ENCODE measurements at regions of chr1 and their contacts with region 1.

Region 1: GRCh38 chr1:207811920-207812720 is 60.3 kb downstream of the CD46 start:
- DNase-seq: no peak
- ATAC-seq: peak; percentile 53
- H3K4me3 ChIP-seq: no peak overlapping the region
- H3K27ac ChIP-seq: no peak overlapping the region
- H3K4me1 ChIP-seq: peaks cover 26% of the 10 kb centered on the region
- H3K27me3 ChIP-seq: no peaks in the 10 kb centered on the region
- CTCF ChIP-seq: peak; percentile 50 to 60 (median 56)
- EP300 ChIP-seq: no peak
- POLR2A ChIP-seq: peak; percentile 37; the same call in 1 of the 2 replicates
- RAD21 ChIP-seq: peak; percentile 55

Region 2: GRCh38 chr1:207742850-207743555 is 69.1 kb before region 1 on chr1:
- CTCF ChIA-PET with region 1: no interaction called
- POLR2A ChIA-PET with region 1: no interaction called
- RAD21 ChIA-PET with region 1: no interaction called
- SMC1A ChIA-PET with region 1: no interaction called
- in situ Hi-C with region 1: no loop called
- intact Hi-C with region 1: no loop called
- DNase-seq: no peak
- ATAC-seq: no peak
- H3K4me3 ChIP-seq: no peak overlapping the region
- H3K27ac ChIP-seq: no peak overlapping the region
- H3K4me1 ChIP-seq: no peaks in the 10 kb centered on the region
- H3K27me3 ChIP-seq: no peaks in the 10 kb centered on the region
- CTCF ChIP-seq: no peak
- EP300 ChIP-seq: no peak
- POLR2A ChIP-seq: no peak
- RAD21 ChIP-seq: no peak

Region 3: DNA sequence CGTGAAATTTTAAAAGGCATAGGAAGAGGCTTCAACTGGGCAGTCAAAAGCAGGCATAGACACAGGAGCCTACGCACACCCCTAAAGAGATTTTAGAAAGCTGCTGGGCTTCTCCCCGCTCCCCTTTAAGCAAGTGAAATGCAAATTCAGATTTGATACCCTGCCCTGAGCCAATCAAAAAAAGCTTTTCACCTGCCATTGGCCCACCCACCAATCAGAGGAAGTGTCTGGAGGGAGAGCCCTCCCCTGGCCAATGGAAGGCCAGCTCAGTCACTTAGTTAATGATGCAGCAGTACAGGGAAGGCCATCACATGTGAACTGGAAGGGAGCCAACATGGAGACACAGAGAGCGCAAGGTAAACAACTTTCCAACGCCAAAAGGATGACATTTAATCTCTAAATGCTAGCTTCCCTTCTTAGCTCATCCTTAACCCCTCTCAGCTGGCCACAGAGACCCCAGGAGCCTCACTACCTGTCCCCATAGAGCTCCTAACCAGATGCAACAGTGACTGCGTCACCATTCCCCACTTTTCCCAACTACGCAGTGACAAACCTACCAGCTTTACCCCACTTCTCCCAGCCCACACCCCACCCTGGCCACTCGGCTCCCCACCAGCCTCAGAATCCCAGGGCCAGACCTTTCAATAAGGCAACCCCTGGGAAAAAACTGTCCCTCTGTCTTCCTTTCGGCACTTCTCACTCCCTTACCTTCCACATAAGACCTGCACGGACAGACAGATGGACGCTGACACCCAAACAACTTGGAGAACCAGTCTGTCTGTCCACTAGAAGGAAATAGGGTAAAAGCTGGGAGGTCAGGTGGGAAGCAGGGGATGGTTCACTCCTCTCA is 10.7 kb after region 1 on chr1:
- CTCF ChIA-PET with region 1: interaction called, 18 read pairs
- POLR2A ChIA-PET with region 1: interaction called, 15 read pairs
- RAD21 ChIA-PET with region 1: interaction called, 13 read pairs
- SMC1A ChIA-PET with region 1: interaction called, 14 read pairs
- in situ Hi-C with region 1: no loop called
- intact Hi-C with region 1: no loop called
- DNase-seq: peak; percentile 96
- ATAC-seq: peak; percentile 77
- H3K4me3 ChIP-seq: peak overlapping the region; percentile 93
- H3K27ac ChIP-seq: peak overlapping the region; percentile 95
- H3K4me1 ChIP-seq: peaks cover 34% of the 10 kb centered on the region
- H3K27me3 ChIP-seq: no peaks in the 10 kb centered on the region
- CTCF ChIP-seq: no peak
- EP300 ChIP-seq: 0 out of 4 replicates have a peak, but pooled peaks have one; percentile 9 to 26
- POLR2A ChIP-seq: peak; percentile 80; the same call in 1 of the 2 replicates
- RAD21 ChIP-seq: no peak

Region 4: DNA sequence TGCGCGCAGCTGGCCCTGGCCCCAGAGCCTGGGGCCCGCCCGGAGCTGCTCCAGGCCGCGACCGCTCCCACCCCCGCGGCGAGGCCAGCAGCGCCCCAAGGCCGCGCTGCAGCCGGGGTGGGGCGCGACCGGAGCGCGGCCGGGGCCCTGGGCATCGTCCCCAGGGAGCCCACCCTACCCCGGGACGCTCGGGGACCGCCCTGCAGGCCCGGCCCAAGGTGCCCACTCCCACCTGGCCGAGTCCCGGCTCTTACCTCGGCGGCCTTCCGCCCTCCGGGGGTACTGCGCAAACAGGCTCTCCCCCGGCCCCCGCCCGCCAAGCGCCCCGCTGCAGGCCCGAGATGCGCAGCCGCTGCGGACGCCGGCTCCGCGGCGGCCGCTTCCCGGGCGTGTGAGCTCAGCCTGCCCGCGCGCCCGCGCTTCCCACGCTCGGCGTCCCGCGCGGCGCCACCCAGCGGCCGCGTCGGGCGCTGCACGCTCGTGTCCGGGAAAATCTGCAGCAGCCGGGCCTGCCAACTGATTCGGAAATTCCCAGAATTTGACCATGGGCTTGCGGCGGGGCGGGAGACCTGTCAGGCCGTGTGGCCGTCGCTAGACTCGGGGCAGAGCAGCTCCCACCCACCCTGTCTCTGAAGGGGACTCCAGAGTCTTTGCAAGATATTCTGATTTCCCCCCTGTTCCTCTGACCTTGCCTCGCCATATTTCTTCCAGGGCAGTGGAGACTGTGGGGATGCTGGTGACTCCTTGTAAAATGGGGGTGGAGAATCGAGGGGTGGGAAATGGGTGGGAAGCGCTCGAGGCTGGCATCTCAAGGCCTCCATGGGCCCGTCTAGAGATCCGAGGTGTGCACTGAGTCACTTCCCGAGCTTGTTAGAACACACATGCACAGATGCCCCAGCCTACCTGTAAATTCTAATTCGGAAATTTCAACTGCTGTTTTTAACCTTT is 56.9 kb after region 1 on chr1:
- CTCF ChIA-PET with region 1: interaction called, 52 read pairs
- POLR2A ChIA-PET with region 1: interaction called, 620 read pairs
- RAD21 ChIA-PET with region 1: interaction called, 8 read pairs
- SMC1A ChIA-PET with region 1: interaction called, 19 read pairs
- in situ Hi-C with region 1: no loop called
- intact Hi-C with region 1: no loop called
- DNase-seq: no peak
- ATAC-seq: peak; percentile 82
- H3K4me3 ChIP-seq: peak overlapping the region; percentile 97
- H3K27ac ChIP-seq: peak overlapping the region; percentile 77
- H3K4me1 ChIP-seq: peaks cover 55% of the 10 kb centered on the region
- H3K27me3 ChIP-seq: no peaks in the 10 kb centered on the region
- CTCF ChIP-seq: peak; percentile 70 to 83 (median 81)
- EP300 ChIP-seq: no peak; a peak in 1 of 4 replicates
- POLR2A ChIP-seq: peak; percentile 64; the same call in 1 of the 2 replicates
- RAD21 ChIP-seq: peak; percentile 62

Region 5: GRCh38 chr1:207876131-207876530 is 64.0 kb after region 1 on chr1:
- CTCF ChIA-PET with region 1: interaction called, 24 read pairs
- POLR2A ChIA-PET with region 1: interaction called, 620 read pairs
- RAD21 ChIA-PET with region 1: interaction called, 4 read pairs
- SMC1A ChIA-PET with region 1: interaction called, 5 read pairs
- in situ Hi-C with region 1: no loop called
- intact Hi-C with region 1: no loop called
- DNase-seq: no peak
- ATAC-seq: peak; percentile 45; the same call in 2 of the 3 replicates
- H3K4me3 ChIP-seq: no peak overlapping the region
- H3K27ac ChIP-seq: no peak overlapping the region
- H3K4me1 ChIP-seq: peaks cover 20% of the 10 kb centered on the region
- H3K27me3 ChIP-seq: no peaks in the 10 kb centered on the region
- CTCF ChIP-seq: peak in 2 of 3 experiments; percentile 21 to 38; a peak in 3 of 6 replicates
- EP300 ChIP-seq: no peak
- POLR2A ChIP-seq: no peak
- RAD21 ChIP-seq: peak; percentile 46

Region 6: DNA sequence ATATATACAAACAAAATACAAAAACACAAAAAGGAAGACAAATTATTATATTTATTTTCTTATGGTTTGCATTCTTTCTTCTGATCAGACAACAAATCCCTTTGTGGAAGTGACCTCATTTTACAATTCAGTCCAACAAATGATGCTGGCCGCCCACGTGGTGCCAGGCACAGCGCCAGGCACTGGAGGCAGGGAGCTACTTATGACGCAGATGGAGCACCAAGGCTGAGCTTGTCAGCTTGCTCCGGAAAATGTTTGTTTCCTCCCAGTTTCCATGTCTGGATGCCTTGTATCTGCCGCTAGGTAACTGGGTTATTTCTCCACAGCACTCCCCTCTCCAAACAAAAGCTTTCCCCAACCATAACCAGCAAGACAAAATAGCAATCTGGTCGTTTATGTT is 129.5 kb after region 1 on chr1:
- CTCF ChIA-PET with region 1: no interaction called
- POLR2A ChIA-PET with region 1: no interaction called
- RAD21 ChIA-PET with region 1: no interaction called
- SMC1A ChIA-PET with region 1: no interaction called
- in situ Hi-C with region 1: no loop called
- intact Hi-C with region 1: no loop called
- DNase-seq: no peak
- ATAC-seq: no peak
- H3K4me3 ChIP-seq: no peak overlapping the region
- H3K27ac ChIP-seq: no peak overlapping the region
- H3K4me1 ChIP-seq: no peaks in the 10 kb centered on the region
- H3K27me3 ChIP-seq: no peaks in the 10 kb centered on the region
- CTCF ChIP-seq: no peak
- EP300 ChIP-seq: no peak
- POLR2A ChIP-seq: no peak
- RAD21 ChIP-seq: no peak